GM12878 (cell line): ENCODE measurements at regions of chr7 and their contacts with region 1.

Region 1: DNA sequence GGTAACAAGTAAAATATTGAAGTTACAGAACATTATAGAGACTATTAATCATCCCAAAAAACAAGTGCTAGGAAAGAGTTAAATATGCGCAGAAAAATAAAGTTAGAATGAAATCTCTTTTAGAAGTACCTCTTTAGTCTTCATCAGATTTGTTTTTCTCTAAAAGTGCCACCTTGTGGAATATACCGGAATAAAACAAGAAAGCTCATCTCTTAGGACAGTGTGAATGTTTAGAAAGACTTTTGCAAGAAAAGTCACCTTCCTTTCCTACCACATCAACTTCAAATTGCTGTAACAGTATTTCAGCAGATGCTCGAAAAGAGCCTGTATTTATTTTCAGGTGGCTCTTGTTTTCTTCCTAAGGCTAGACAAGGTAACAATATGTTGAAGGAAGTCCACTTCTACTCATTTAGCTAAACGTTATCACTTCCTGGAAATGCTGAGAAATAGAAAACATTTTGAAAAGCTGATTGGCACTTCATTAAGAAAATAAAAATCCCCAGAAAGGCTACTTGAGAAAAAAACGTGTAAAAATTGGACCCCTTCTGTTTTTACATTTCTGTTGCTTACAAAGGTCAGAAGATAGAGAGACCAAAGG is 19.8 kb upstream of the FAM133B start:
- DNase-seq: no peak
- ATAC-seq: peak; percentile 80
- H3K4me3 ChIP-seq: no peak overlapping the region
- H3K27ac ChIP-seq: no peak overlapping the region
- H3K4me1 ChIP-seq: no peaks in the 10 kb centered on the region
- H3K27me3 ChIP-seq: no peaks in the 10 kb centered on the region
- CTCF ChIP-seq: peak in 2 of 3 experiments; percentile 29 to 42; a peak in 4 of 6 replicates
- EP300 ChIP-seq: no peak
- POLR2A ChIP-seq: no peak
- RAD21 ChIP-seq: peak; percentile 35; the same call in 1 of the 2 replicates

Region 2: GRCh38 chr7:92590711-92591310 is 19.2 kb before region 1 on chr7:
- CTCF ChIA-PET with region 1: interaction called, 10 read pairs
- POLR2A ChIA-PET with region 1: interaction called, 5 read pairs
- RAD21 ChIA-PET with region 1: no interaction called
- SMC1A ChIA-PET with region 1: interaction called, 4 read pairs
- in situ Hi-C with region 1: no loop called
- intact Hi-C with region 1: no loop called
- DNase-seq: no peak
- ATAC-seq: no peak
- H3K4me3 ChIP-seq: peak overlapping the region; percentile 100
- H3K27ac ChIP-seq: no peak overlapping the region
- H3K4me1 ChIP-seq: peaks cover 10% of the 10 kb centered on the region; the same call in 1 of the 2 replicates
- H3K27me3 ChIP-seq: no peaks in the 10 kb centered on the region
- CTCF ChIP-seq: no peak
- EP300 ChIP-seq: no peak
- POLR2A ChIP-seq: no peak
- RAD21 ChIP-seq: no peak